ENCODE measurements at regions of chr2 and their contacts with region 1.

Region 1: DNA sequence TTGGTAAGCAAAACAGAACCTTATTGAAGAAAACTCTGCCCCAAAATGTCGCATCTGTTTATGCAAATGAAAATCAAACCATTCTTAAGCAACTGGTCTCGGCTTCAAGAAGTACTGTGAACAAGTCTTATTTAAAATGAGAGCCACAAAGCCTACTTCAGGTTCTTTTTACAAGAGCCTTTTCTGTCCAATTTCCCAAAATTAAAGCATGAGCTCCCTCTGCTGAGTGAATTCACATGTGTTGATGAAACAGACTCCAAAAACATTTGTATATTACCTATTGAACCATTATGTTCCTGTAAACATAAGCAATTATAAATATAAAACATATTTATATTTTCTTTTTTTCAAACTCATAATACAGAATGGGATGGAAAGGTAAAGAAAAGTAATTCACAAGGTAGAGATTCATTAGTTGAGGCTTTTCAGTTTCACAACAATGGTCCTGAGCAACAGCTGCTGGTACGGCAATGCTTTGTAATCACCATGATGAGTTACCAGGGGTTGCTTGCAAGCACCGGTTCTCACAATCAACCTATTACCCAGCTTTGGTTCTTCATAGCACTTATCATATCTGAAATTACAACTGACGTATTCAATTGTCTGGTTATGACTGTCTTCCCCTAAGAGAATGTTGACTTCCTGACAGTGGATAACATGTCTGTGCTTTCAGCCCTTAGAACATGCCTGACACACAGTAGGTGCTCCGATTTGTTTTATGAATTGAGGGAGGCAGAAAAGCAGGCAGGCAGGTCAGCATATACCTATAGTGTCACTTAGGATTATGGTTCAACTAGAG is 108.4 kb upstream of the BZW1 start:
- DNase-seq: no peak
- ATAC-seq: peak; percentile 46 to 55

Region 2: DNA sequence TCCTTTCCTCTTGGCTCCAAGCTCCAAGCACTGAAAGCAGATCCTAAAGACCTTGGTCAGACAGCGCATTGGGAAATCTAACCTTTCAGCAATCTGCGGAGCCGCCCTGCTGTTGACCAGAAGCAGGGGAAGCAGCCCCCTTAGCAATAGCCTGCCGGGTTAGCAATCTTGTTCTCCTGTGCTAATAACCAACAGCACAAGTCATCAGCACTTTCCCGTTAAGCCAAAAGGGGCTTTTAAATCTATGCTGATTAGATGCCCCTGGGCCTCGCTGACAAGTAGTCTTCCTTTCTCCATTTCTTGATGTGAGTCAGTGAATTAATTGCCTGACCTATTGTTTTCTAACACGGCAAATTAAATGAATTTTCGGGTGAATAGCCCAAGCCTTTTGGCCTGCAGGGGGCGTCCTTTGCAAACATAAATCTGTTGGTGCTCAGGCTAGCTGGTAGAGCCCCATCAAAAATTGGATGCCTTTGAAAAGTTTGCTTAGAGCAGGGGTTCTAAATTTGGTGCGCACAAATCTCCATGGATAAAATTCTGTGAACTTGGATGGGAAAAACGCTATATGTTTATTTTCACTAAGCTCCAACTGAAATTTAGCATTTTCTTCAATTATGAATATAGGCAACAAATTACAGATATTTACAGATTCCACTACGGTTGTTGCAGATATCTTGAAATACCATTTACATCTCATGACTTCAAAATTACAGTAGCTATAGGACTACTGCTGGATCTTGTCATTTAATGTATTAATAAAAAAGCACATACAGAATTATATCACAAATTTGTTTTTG is 723.3 kb before region 1 on chr2:
- intact Hi-C with region 1: loop called in 1 of 2 experiments (anchors 5 kb)
- DNase-seq: peak; percentile 88
- ATAC-seq: peak; percentile 81 to 83

Region 3: GRCh38 chr2:200575957-200576356 is 127.4 kb before region 1 on chr2:
- intact Hi-C with region 1: loop called in 1 of 2 experiments (anchors 2 kb)
- DNase-seq: no peak
- ATAC-seq: no peak

Measured in left cardiac atrium (tissue), 4 donors.